Thyroid gland (tissue), 4 donors: ENCODE measurements at regions of chr1 and their contacts with region 1.

Region 1: DNA sequence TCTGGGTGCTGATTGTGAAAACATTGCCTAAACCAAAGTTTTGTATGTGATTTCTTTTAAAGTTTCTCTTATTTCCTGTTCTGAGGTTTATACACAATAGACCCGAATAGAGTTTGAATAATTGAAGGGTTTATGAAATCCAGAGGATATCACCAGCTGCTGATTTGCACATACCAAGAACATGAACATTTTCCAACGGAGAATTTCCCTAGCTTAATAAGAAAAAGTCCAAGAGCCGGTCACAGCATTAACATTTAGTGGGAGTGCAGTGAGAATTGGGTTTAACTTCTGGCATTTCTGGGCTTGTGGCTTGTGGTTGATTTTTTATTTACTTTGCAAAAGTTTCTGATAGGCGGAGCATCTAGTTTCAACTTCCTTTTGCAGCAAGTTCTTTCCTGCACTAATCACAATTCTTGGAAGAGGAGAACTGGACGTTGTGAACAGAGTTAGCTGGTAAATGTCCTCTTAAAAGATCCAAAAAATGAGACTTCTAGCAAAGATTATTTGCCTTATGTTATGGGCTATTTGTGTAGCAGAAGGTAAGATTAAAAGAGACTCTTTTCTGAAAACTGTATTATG is at the start of gene CFH:
- DNase-seq: no peak
- H3K4me3 ChIP-seq: no peak within 1 kb of the TSS
- H3K27ac ChIP-seq: peak within 1 kb of the TSS in 1 of 3 donors; percentile 19
- H3K4me1 ChIP-seq: no peaks in the 10 kb centered on the region
- H3K27me3 ChIP-seq: no peaks in the 10 kb centered on the region
- CTCF ChIP-seq: no peak
- POLR2A ChIP-seq: peak in 1 of 2 donors; percentile 70
- total RNA-seq, gene CFH: 93.0 to 422 (median 229) TPM

Region 2: DNA sequence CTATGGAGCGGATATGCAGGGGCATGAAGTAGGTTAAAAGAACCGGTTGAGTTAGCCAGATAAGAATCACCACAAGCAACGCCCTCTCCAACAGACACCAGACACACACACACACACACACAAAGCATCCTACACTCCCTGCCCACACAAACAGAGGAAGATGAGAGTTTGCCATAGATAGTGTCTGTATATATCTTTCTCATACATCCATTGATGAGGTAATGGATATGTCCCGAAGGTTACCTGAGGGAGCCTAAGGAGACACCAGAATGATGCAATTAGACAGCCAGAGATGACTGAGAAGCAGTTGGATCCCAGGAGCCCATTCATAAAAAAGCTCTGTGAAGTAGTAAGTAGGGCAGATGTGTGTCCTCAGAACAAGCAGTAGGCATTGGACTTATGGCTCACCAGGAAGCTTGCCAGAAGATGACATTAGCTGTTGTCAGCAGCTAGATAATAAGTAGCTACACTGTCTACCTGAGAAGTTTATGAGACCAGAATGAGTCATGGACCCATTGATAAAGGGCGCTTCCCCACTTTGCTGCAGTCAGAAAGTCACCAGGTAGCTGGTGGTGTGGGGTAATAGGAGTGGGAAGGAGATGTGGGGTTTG is 290.5 kb before region 1 on chr1:
- intact Hi-C with region 1: loop called (anchors 10 kb)
- DNase-seq: no peak
- H3K4me3 ChIP-seq: no peak overlapping the region
- H3K27ac ChIP-seq: no peak overlapping the region
- H3K4me1 ChIP-seq: no peaks in the 10 kb centered on the region
- H3K27me3 ChIP-seq: no peaks in the 10 kb centered on the region
- CTCF ChIP-seq: no peak
- POLR2A ChIP-seq: no peak

Region 3: GRCh38 chr1:196531737-196532524 is 119.8 kb before region 1 on chr1:
- intact Hi-C with region 1: no loop called
- DNase-seq: no peak
- H3K4me3 ChIP-seq: no peak overlapping the region
- H3K27ac ChIP-seq: peak overlapping the region; percentile 1 to 24 (median 15)
- H3K4me1 ChIP-seq: no peaks in the 10 kb centered on the region
- H3K27me3 ChIP-seq: no peaks in the 10 kb centered on the region
- CTCF ChIP-seq: no peak
- POLR2A ChIP-seq: no peak

Region 4: DNA sequence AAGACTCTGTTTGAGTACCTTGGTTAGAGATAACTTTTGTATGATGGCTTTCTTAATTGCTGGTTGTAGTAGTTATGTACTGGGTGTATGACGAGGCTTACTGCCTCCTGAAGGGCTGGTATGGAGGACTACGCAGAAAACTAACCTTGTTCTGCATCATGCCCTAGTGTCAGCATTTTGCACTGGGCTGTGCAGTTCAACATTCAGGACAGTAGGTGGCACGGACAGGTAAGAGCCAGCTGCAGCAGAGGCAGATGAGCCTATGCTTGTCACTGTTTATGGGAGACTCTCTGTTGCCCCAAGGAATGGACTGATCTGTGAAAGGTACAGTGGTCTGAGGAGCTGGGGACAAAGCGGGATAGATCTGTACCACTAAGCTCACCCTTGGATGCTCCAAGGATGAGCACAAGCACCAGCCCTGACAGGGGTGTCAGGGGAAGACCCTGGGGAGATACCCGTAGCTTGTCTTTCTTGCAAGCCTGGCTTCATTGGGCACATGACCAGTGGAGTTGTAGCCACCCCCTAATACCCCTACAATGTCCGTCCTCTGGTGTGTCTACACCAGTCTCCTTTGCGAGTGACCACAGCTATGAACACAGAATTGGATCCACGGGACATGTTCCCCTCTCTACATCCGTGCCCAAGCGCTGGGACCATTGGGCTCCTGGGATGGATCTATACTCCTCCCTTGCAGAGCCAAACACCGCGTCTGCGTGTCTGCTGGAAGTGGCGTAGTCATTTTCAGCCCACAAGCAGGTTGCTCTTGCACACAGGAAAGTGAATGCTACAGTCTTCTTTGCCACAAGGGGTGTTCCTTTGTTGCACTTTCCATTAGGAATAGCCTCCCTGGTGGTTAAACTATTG is 71.8 kb after region 1 on chr1:
- intact Hi-C with region 1: no loop called
- DNase-seq: peak in 1 of 2 donors; percentile 48
- H3K4me3 ChIP-seq: no peak overlapping the region
- H3K27ac ChIP-seq: no peak overlapping the region
- H3K4me1 ChIP-seq: no peaks in the 10 kb centered on the region
- H3K27me3 ChIP-seq: no peaks in the 10 kb centered on the region
- CTCF ChIP-seq: peak in 2 of 6 experiments; percentile 7 to 52
- POLR2A ChIP-seq: no peak